B cell (primary cell): ENCODE measurements at regions of chr6 and their contacts with region 1.

Region 1: DNA sequence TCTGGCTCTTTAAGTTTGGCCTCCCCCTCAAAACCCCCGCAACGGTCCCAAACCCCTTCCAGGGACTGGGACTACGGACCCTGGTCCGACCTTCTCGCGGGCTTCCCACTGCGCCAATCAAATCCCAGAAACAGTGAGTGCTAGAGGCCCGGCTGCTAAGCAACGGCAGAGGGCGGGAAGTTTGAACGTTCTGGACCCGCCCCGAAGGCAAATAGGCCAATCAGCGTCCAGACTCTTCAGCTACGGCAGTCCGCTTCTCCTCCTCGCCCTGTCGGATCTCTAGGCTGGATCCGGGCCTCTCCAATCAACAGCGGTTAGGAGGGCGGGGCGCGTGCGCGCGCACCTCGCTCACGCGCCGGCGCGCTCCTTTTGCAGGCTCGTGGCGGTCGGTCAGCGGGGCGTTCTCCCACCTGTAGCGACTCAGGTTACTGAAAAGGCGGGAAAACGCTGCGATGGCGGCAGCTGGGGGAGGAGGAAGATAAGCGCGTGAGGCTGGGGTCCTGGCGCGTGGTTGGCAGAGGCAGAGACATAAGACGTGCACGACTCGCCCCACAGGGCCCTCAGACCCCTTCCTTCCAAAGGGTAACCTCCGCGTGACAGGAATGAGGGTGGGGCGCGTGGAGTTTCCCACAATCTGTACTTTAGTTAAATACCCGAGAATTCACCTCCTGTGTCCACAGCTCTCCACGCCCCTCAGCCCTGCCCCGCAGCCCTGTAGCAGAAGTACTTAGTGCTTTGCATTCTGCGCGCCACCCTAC is at the start of gene MSH5:
- DNase-seq: peak; percentile 96
- ATAC-seq: peak; percentile 82
- H3K4me3 ChIP-seq: peak within 1 kb of the TSS; percentile 71 to 90 (median 81)
- H3K4me3 Mint-ChIP-seq: peak within 1 kb of the TSS; percentile 100
- H3K27ac ChIP-seq: peak within 1 kb of the TSS; percentile 81 to 96
- H3K27ac Mint-ChIP-seq: peak within 1 kb of the TSS; percentile 91
- H3K4me1 ChIP-seq: peaks cover 39 to 42% of the 10 kb centered on the region in 2 donors
- H3K4me1 Mint-ChIP-seq: peaks cover 60% of the 10 kb centered on the region
- H3K27me3 ChIP-seq: no peaks in the 10 kb centered on the region
- H3K27me3 Mint-ChIP-seq: no peaks in the 10 kb centered on the region
- CTCF ChIP-seq: no peak
- total RNA-seq, gene MSH5: 49.9 and 50.1 TPM in 2 replicates

Region 2: GRCh38 chr6:31541658-31542521 is 197.9 kb before region 1 on chr6 and contains the start of gene DDX39B:
- CTCF ChIA-PET with region 1: no interaction called
- POLR2A ChIA-PET with region 1: no interaction called
- intact Hi-C with region 1: loop called (anchors 5 kb)
- DNase-seq: peak; percentile 97
- ATAC-seq: peak; percentile 72
- H3K4me3 ChIP-seq: peak within 1 kb of the TSS; percentile 79 to 100 (median 97)
- H3K4me3 Mint-ChIP-seq: peak within 1 kb of the TSS; percentile 99
- H3K27ac ChIP-seq: peak within 1 kb of the TSS; percentile 97 to 99
- H3K27ac Mint-ChIP-seq: peak within 1 kb of the TSS; percentile 93
- H3K4me1 ChIP-seq: peaks cover 37 to 43% of the 10 kb centered on the region in 2 donors
- H3K4me1 Mint-ChIP-seq: peaks cover 50% of the 10 kb centered on the region
- H3K27me3 ChIP-seq: no peaks in the 10 kb centered on the region
- H3K27me3 Mint-ChIP-seq: no peaks in the 10 kb centered on the region
- CTCF ChIP-seq: no peak
- total RNA-seq, gene DDX39B: 576 and 577 TPM in 2 replicates

Region 3: DNA sequence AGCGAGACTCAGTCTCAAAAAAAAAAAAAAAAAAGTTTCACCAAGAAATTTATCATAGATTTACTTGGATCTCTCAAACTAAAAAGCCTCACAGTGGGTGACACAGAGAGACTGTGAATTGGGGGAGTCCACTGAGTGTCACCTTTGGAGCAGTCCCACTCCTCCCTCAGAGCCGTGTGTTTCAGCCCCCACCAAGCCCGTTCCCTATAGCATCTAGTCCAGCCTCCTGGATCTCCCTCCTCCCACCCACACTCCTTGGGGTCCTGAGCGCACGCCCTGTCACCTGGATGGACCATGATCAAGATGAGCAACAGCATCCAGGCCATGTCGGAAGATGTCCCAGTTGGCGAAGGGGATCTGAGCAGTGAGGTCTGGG is 147.4 kb before region 1 on chr6:
- CTCF ChIA-PET with region 1: no interaction called
- POLR2A ChIA-PET with region 1: no interaction called
- intact Hi-C with region 1: no loop called
- DNase-seq: no peak
- ATAC-seq: peak; percentile 1
- H3K4me3 ChIP-seq: peak overlapping the region; percentile 7 to 62 (median 33)
- H3K4me3 Mint-ChIP-seq: peak overlapping the region; percentile 85
- H3K27ac ChIP-seq: peak overlapping the region; percentile 66 to 68
- H3K27ac Mint-ChIP-seq: peak overlapping the region; percentile 98
- H3K4me1 ChIP-seq: peaks cover 80 to 90% of the 10 kb centered on the region in 2 donors
- H3K4me1 Mint-ChIP-seq: peaks cover 76% of the 10 kb centered on the region
- H3K27me3 ChIP-seq: no peaks in the 10 kb centered on the region
- H3K27me3 Mint-ChIP-seq: no peaks in the 10 kb centered on the region
- CTCF ChIP-seq: no peak

Region 4: DNA sequence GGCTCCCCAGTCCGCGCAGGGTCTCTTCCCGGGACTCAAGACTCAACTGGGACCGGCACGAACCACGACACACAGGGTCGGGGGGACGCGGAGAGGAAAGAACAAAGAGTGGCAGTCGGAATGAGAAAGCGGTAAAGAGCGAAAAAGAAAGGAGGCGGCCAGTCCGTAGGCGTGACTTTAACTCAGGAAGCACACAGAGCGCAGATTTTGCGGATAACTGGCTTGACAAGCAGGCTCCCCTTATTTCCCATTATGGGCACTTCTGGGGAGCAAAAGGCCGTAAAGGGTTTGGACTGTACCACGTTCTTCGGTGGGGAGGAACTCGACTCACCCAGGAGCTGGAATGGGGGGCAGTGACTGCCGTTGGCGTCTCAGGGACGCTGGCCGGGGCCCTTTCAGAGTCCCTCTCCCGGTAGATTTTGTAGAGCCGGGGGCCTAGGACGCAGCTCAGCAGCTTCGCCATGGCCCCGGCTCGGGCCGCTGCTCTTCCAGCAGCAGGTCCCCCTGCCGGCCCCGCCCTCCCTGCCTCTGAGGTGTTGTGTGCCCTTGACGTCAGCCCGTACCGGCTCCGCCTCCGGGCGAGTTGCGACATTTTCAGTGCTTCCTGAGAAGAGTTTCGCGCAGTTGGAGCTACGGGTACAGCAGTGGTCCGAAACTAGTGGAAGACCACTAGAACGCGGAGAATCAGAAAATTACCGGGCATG is 36.8 kb before region 1 on chr6 and contains the start of gene ABHD16A:
- CTCF ChIA-PET with region 1: interaction called, 3 read pairs
- POLR2A ChIA-PET with region 1: interaction called, 6 read pairs
- intact Hi-C with region 1: loop called (anchors 1 kb)
- DNase-seq: peak; percentile 99
- ATAC-seq: peak; percentile 95
- H3K4me3 ChIP-seq: peak within 1 kb of the TSS; percentile 65 to 98 (median 96)
- H3K4me3 Mint-ChIP-seq: peak within 1 kb of the TSS; percentile 98
- H3K27ac ChIP-seq: peak within 1 kb of the TSS; percentile 87 to 93
- H3K27ac Mint-ChIP-seq: peak within 1 kb of the TSS; percentile 91
- H3K4me1 ChIP-seq: peaks cover 20 to 28% of the 10 kb centered on the region in 2 donors
- H3K4me1 Mint-ChIP-seq: peaks cover 32% of the 10 kb centered on the region
- H3K27me3 ChIP-seq: no peaks in the 10 kb centered on the region
- H3K27me3 Mint-ChIP-seq: no peaks in the 10 kb centered on the region
- CTCF ChIP-seq: no peak
- total RNA-seq, gene ABHD16A: 78.3 and 90.3 TPM in 2 replicates

Region 5: GRCh38 chr6:31776989-31777666 is 37.3 kb after region 1 on chr6 and contains the start of gene VWA7:
- CTCF ChIA-PET with region 1: interaction called, 5 read pairs
- POLR2A ChIA-PET with region 1: interaction called, 3 read pairs
- intact Hi-C with region 1: loop called (anchors 2 kb)
- DNase-seq: peak; percentile 85
- ATAC-seq: peak; percentile 88
- H3K4me3 ChIP-seq: peak within 1 kb of the TSS in 2 of 5 experiments; percentile 5 to 21
- H3K4me3 Mint-ChIP-seq: peak within 1 kb of the TSS; percentile 64
- H3K27ac ChIP-seq: peak within 1 kb of the TSS; percentile 66 to 67
- H3K27ac Mint-ChIP-seq: peak within 1 kb of the TSS; percentile 90
- H3K4me1 ChIP-seq: peaks cover 15 to 28% of the 10 kb centered on the region in 2 donors
- H3K4me1 Mint-ChIP-seq: peaks cover 23% of the 10 kb centered on the region
- H3K27me3 ChIP-seq: no peaks in the 10 kb centered on the region
- H3K27me3 Mint-ChIP-seq: no peaks in the 10 kb centered on the region
- CTCF ChIP-seq: no peak
- total RNA-seq, gene VWA7: 5.2 and 5.6 TPM in 2 replicates

Region 6: GRCh38 chr6:31862344-31863227 is 122.8 kb after region 1 on chr6 and contains the start of gene NEU1:
- CTCF ChIA-PET with region 1: interaction called, 11 read pairs
- POLR2A ChIA-PET with region 1: interaction called, 6 read pairs
- intact Hi-C with region 1: loop called (anchors 1 kb)
- DNase-seq: peak; percentile 100
- ATAC-seq: peak; percentile 90
- H3K4me3 ChIP-seq: peak within 1 kb of the TSS; percentile 69 to 92 (median 85)
- H3K4me3 Mint-ChIP-seq: peak within 1 kb of the TSS; percentile 94
- H3K27ac ChIP-seq: peak within 1 kb of the TSS; percentile 77 to 91
- H3K27ac Mint-ChIP-seq: peak within 1 kb of the TSS; percentile 92
- H3K4me1 ChIP-seq: peaks cover 18 to 23% of the 10 kb centered on the region in 2 donors
- H3K4me1 Mint-ChIP-seq: peaks cover 24% of the 10 kb centered on the region
- H3K27me3 ChIP-seq: no peaks in the 10 kb centered on the region
- H3K27me3 Mint-ChIP-seq: no peaks in the 10 kb centered on the region
- CTCF ChIP-seq: no peak
- total RNA-seq, gene NEU1: 25.3 and 26.0 TPM in 2 replicates

Region 7: DNA sequence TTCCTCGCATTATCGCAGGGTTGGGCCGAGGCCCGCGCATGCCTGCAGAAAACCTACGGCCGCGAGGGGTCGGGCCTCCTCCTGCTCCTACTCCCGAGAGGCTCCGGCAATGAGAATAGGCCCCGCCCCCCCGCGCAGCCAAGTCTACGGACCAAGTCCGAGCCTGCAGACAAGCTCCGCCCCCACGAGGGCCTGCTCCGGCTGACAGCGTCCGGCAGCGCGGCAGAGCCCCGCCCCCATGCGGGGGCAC is 455.8 kb after region 1 on chr6:
- CTCF ChIA-PET with region 1: no interaction called
- POLR2A ChIA-PET with region 1: interaction called, 4 read pairs
- intact Hi-C with region 1: loop called (anchors 10 kb)
- DNase-seq: no peak
- ATAC-seq: peak; percentile 83
- H3K4me3 ChIP-seq: peak overlapping the region in 4 of 5 experiments; percentile 89 to 99 (median 94)
- H3K4me3 Mint-ChIP-seq: peak overlapping the region; percentile 95
- H3K27ac ChIP-seq: peak overlapping the region; percentile 99 to 100
- H3K27ac Mint-ChIP-seq: peak overlapping the region; percentile 99
- H3K4me1 ChIP-seq: peaks cover 40 to 56% of the 10 kb centered on the region in 2 donors
- H3K4me1 Mint-ChIP-seq: peaks cover 58% of the 10 kb centered on the region
- H3K27me3 ChIP-seq: no peaks in the 10 kb centered on the region
- H3K27me3 Mint-ChIP-seq: no peaks in the 10 kb centered on the region
- CTCF ChIP-seq: peak; percentile 55